ENCODE measurements at regions of chr3 and their contacts with region 1.

Region 1: GRCh38 chr3:11060500-11061251 is 68.1 kb downstream of the SLC6A1 start:
- DNase-seq: peak; percentile 69 to 73
- H3K4me3 ChIP-seq: no peak overlapping the region
- H3K27ac ChIP-seq: no peak overlapping the region
- H3K4me1 ChIP-seq: peaks cover 0 to 7% of the 10 kb centered on the region in 2 donors
- H3K27me3 ChIP-seq: no peaks in the 10 kb centered on the region
- CTCF ChIP-seq: peak; percentile 45 to 86 (median 60)
- POLR2A ChIP-seq: no peak

Region 2: GRCh38 chr3:10764259-10765051 is 296.2 kb before region 1 on chr3:
- intact Hi-C with region 1: loop called (anchors 10 kb)
- DNase-seq: no peak
- H3K4me3 ChIP-seq: no peak overlapping the region
- H3K27ac ChIP-seq: no peak overlapping the region
- H3K4me1 ChIP-seq: no peaks in the 10 kb centered on the region
- H3K27me3 ChIP-seq: no peaks in the 10 kb centered on the region
- CTCF ChIP-seq: no peak
- POLR2A ChIP-seq: no peak

Region 3: GRCh38 chr3:10804183-10804648 is 256.5 kb before region 1 on chr3:
- intact Hi-C with region 1: no loop called
- DNase-seq: no peak
- H3K4me3 ChIP-seq: no peak overlapping the region
- H3K27ac ChIP-seq: no peak overlapping the region
- H3K4me1 ChIP-seq: no peaks in the 10 kb centered on the region
- H3K27me3 ChIP-seq: no peaks in the 10 kb centered on the region
- CTCF ChIP-seq: no peak
- POLR2A ChIP-seq: no peak

Region 4: DNA sequence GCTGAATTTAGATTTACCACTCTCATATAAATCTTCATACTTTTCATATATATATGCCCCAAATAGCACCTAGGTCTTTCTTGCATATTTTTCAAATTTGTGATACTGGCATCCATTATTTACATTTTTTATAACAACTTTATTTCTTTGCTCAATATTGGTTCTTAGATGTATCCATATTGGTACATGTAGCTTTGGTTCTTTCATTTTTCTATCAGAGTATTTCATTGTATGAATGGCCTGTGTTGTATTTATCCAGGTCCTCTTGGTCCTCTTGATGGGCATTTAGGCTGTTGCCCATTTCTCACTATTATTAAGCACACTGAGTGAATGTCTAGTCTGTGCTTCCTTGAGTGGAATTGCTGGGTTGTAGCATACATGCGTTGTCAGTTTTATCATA is 236.2 kb before region 1 on chr3:
- intact Hi-C with region 1: no loop called
- DNase-seq: no peak
- H3K4me3 ChIP-seq: no peak overlapping the region
- H3K27ac ChIP-seq: no peak overlapping the region
- H3K4me1 ChIP-seq: no peaks in the 10 kb centered on the region
- H3K27me3 ChIP-seq: no peaks in the 10 kb centered on the region
- CTCF ChIP-seq: no peak
- POLR2A ChIP-seq: no peak

Region 5: GRCh38 chr3:10945683-10946287 is 114.9 kb before region 1 on chr3:
- intact Hi-C with region 1: loop called (anchors 1 kb)
- DNase-seq: peak; percentile 58
- H3K4me3 ChIP-seq: no peak overlapping the region
- H3K27ac ChIP-seq: no peak overlapping the region
- H3K4me1 ChIP-seq: no peaks in the 10 kb centered on the region
- H3K27me3 ChIP-seq: no peaks in the 10 kb centered on the region
- CTCF ChIP-seq: peak; percentile 40 to 81 (median 66)
- POLR2A ChIP-seq: no peak

Region 6: DNA sequence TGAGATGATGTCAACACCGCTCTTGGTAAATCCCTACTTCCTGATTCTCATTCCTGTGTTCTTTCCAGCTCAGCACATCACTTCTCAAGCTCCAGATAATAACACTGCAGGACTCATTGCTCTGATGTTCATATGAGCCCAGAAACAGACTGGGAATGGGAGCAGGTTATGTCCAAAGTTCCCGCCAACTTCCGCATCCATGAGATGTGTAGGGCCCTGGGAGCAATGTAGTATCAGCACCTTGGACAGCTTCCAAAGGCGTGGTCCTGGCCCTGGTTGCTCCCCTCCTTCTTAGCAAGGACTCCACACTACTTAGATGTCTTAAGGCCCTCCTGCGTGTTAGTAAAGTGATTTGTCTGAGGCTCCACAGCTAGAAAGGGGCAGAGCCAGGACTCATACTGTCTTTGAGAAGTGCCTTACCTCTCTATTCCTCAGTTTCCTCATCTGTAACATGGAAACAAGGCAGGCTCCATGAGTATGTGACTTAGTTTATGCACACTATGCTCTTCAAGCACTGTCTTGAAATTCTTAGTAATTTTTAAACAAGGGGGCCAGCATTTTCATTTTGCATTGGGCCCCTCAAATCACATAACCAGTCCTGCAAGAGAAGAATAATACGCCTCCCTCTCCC is 96.0 kb before region 1 on chr3:
- intact Hi-C with region 1: no loop called
- DNase-seq: no peak
- H3K4me3 ChIP-seq: no peak overlapping the region
- H3K27ac ChIP-seq: no peak overlapping the region
- H3K4me1 ChIP-seq: no peaks in the 10 kb centered on the region
- H3K27me3 ChIP-seq: no peaks in the 10 kb centered on the region
- CTCF ChIP-seq: no peak
- POLR2A ChIP-seq: no peak

Region 7: GRCh38 chr3:11335056-11335608 is 274.5 kb after region 1 on chr3:
- intact Hi-C with region 1: loop called (anchors 5 kb)
- DNase-seq: no peak
- H3K4me3 ChIP-seq: no peak overlapping the region
- H3K27ac ChIP-seq: no peak overlapping the region
- H3K4me1 ChIP-seq: no peaks in the 10 kb centered on the region
- H3K27me3 ChIP-seq: no peaks in the 10 kb centered on the region
- CTCF ChIP-seq: peak; percentile 15 to 62 (median 42)
- POLR2A ChIP-seq: no peak

Measured in thyroid gland (tissue), 4 donors.